ENCODE measurements at regions of chr18 and their contacts with region 1.

Region 1: GRCh38 chr18:58864146-58865032 is at the start of gene ZNF532:
- DNase-seq: peak in 3 of 5 donors; percentile 51 to 60 (median 57)
- ATAC-seq: peak; percentile 46 to 73 (median 56)
- H3K4me3 ChIP-seq: peak within 1 kb of the TSS; percentile 29 to 76 (median 55)
- H3K27ac ChIP-seq: peak within 1 kb of the TSS; percentile 92 to 100 (median 98)
- H3K4me1 ChIP-seq: peaks cover 21 to 93% (median 77%) of the 10 kb centered on the region in 12 donors
- H3K27me3 ChIP-seq: no peaks in the 10 kb centered on the region
- CTCF ChIP-seq: no peak
- POLR2A ChIP-seq: no peak
- total RNA-seq, gene ZNF532: 50.7 to 84.4 (median 70.9) TPM

Region 2: GRCh38 chr18:58788971-58789875 is 75.2 kb before region 1 on chr18:
- intact Hi-C with region 1: loop called in 6 of 10 experiments (anchors 5 kb)
- DNase-seq: peak; percentile 68 to 77 (median 69)
- ATAC-seq: peak in 3 of 4 donors; percentile 67 to 77 (median 68)
- H3K4me3 ChIP-seq: no peak overlapping the region
- H3K27ac ChIP-seq: peak overlapping the region; percentile 5 to 76 (median 72)
- H3K4me1 ChIP-seq: peaks cover 0 to 44% (median 27%) of the 10 kb centered on the region in 12 donors
- H3K27me3 ChIP-seq: no peaks in the 10 kb centered on the region
- CTCF ChIP-seq: no peak
- POLR2A ChIP-seq: no peak

Region 3: DNA sequence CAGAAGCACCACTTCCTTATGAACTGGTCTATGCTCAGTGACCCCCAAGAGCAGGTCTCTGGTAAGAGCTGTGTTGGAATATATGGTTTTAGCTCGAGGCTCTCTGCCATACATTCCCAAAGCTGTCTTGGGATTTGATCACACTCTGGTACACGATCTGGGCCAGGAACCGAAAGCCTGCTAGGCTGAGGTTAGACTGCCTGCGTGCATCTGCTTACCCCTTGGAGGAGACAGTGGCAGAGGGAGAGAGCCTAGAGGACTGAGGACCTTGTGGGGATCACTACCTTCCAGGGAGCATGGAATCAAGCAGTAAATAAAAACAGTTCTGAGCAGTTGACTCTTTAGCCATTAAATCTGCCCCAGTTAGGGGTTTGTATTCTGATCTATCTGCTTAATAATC is 64.0 kb after region 1 on chr18:
- intact Hi-C with region 1: loop called in 1 of 10 experiments (anchors 5 kb)
- DNase-seq: no peak
- ATAC-seq: peak in 3 of 4 donors; percentile 43 to 53 (median 46)
- H3K4me3 ChIP-seq: no peak overlapping the region
- H3K27ac ChIP-seq: peak overlapping the region; percentile 12 to 77 (median 60)
- H3K4me1 ChIP-seq: peaks cover 5 to 37% (median 28%) of the 10 kb centered on the region in 12 donors
- H3K27me3 ChIP-seq: no peaks in the 10 kb centered on the region
- CTCF ChIP-seq: no peak
- POLR2A ChIP-seq: no peak

Region 4: DNA sequence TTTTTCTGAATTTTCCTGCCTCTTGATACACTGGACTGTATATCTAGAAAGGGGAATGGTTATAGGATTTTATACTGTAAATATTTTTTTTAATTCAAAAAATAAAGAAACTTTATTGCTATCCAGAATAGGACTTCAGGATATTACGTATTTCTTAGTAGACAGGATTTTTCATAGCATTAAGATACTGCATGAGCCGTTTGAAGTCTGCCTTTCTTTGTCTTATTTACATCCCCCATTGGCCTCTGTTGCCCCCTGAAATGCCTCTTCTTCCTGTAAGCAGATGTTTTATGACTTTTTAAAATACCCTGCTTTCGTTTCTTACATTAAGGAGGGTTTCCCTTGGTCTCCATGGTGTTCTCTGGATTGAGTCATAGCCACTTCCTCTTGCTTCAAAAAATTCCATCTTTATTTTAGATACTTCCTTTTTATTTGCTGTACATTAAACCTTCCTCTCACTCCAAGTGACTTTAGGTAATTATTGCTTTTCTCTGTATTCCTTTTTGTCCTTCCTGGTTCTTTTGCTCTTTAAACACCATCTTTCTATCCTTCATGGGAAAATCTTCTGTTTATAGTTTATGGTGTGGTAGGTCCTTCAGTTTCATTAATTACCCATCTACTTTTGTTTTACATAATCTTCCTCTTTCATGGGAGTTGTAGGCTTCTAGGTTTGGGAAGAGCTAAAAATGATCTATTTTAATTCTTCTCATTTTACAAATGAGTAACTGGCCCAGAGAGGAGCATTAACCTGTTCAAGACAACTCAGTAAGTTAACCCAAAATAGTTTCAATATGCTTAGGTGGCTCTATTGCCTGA is 72.9 kb after region 1 on chr18:
- intact Hi-C with region 1: loop called in 1 of 10 experiments (anchors 5 kb)
- DNase-seq: no peak
- ATAC-seq: peak in 2 of 4 donors; percentile 64 to 67
- H3K4me3 ChIP-seq: no peak overlapping the region
- H3K27ac ChIP-seq: peak overlapping the region in 11 of 12 donors; percentile 18 to 88 (median 54)
- H3K4me1 ChIP-seq: peaks cover 0 to 33% (median 17%) of the 10 kb centered on the region in 12 donors
- H3K27me3 ChIP-seq: no peaks in the 10 kb centered on the region
- CTCF ChIP-seq: no peak
- POLR2A ChIP-seq: no peak

Region 5: GRCh38 chr18:58991167-58991798 is 126.9 kb after region 1 on chr18:
- intact Hi-C with region 1: loop called in 5 of 10 experiments (anchors 5 to 10 kb)
- DNase-seq: no peak
- ATAC-seq: peak; percentile 18 to 64 (median 60)
- H3K4me3 ChIP-seq: no peak overlapping the region
- H3K27ac ChIP-seq: peak overlapping the region in 11 of 12 donors; percentile 58 to 95 (median 82)
- H3K4me1 ChIP-seq: peaks cover 14 to 65% (median 48%) of the 10 kb centered on the region in 12 donors
- H3K27me3 ChIP-seq: no peaks in the 10 kb centered on the region
- CTCF ChIP-seq: peak in 2 of 12 donors; percentile 8 to 26
- POLR2A ChIP-seq: no peak

Region 6: GRCh38 chr18:58998401-58999203 is 134.2 kb after region 1 on chr18:
- intact Hi-C with region 1: loop called in 5 of 10 experiments (anchors 5 to 10 kb)
- DNase-seq: peak; percentile 70 to 80 (median 72)
- ATAC-seq: peak; percentile 87 to 89 (median 88)
- H3K4me3 ChIP-seq: peak overlapping the region in 8 of 12 donors; percentile 10 to 36 (median 26)
- H3K27ac ChIP-seq: peak overlapping the region; percentile 81 to 95 (median 88)
- H3K4me1 ChIP-seq: peaks cover 11 to 62% (median 46%) of the 10 kb centered on the region in 12 donors
- H3K27me3 ChIP-seq: no peaks in the 10 kb centered on the region
- CTCF ChIP-seq: peak in 1 of 12 donors; percentile 20
- POLR2A ChIP-seq: peak in 1 of 2 donors; percentile 31

Measured in heart left ventricle (tissue), 16 donors.